HEK293T (cell line): ENCODE measurements at regions of chr7 and their contacts with region 1.

Region 1: GRCh38 chr7:134327896-134328295 is 11.2 kb upstream of the SLC35B4 start:
- DNase-seq: peak; percentile 78

Region 2: GRCh38 chr7:134154581-134155130 is 173.2 kb before region 1 on chr7:
- CTCF ChIA-PET with region 1: no interaction called
- POLR2A ChIA-PET with region 1: no interaction called
- DNase-seq: no peak

Region 3: GRCh38 chr7:134245253-134245652 is 82.6 kb before region 1 on chr7:
- CTCF ChIA-PET with region 1: no interaction called
- POLR2A ChIA-PET with region 1: no interaction called
- DNase-seq: no peak

Region 4: GRCh38 chr7:134316539-134317344 is 11.2 kb before region 1 on chr7 and contains the start of gene SLC35B4:
- CTCF ChIA-PET with region 1: interaction called, 4 read pairs
- POLR2A ChIA-PET with region 1: interaction called, 20 read pairs
- DNase-seq: peak; percentile 99